ENCODE measurements at regions of chrX and their contacts with region 1.

Region 1: DNA sequence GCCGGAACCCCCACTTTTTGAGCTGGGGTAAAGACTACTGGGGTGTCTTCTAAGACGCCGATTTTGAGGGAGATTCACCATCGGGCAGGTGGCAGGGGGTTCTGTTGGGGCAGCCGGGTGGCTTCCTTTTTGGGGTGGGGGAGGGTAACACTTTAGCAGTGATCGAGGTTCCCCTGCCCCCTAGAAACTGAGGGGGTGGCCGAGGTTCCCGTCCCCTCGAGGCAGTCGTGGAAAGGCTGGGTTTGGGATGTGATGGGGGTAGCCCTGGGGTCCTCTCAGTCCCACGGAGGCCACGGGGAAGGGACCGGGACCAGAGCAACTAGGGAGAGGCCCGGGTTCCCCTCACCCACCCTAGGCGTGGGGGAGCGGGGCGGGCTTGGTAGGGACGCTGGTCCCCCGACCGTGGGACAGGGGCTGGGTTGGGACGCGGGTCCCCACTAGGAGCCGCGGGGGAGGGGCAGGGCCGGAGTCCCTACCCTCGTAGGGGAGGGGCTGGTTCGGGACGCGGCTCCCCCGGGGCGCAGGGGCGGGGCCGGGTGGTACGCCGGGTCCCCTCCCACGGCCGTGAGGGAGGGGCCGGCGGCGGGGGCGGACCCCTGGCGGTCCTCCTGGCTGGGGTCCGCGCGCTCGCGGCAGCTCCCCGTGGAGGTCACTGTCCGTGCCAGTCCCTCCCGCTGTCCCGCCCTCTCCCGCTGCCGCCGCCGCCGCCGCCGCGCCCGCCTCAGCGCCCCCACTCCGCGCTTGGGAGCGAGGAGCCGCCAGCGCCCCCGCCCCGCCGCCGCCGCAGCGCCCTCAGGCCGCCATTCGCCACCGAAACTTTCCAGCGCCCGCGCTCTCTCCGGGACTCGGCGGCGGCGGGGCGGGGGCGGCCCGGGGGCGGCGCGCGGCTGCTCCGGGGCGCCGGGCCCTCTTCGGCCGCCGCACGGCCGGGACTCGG is at the start of gene TBL1X:
- DNase-seq: peak; percentile 65
- H3K4me3 ChIP-seq: peak within 1 kb of the TSS; percentile 65
- H3K27ac ChIP-seq: peak within 1 kb of the TSS; percentile 85
- H3K4me1 ChIP-seq: peaks cover 21% of the 10 kb centered on the region
- H3K27me3 ChIP-seq: no peaks in the 10 kb centered on the region
- CTCF ChIP-seq: no peak
- total RNA-seq, gene TBL1X: 26.9 and 33.0 TPM in 2 replicates

Region 2: GRCh38 chrX:8971116-8971515 is 493.6 kb before region 1 on chrX:
- CTCF ChIA-PET with region 1: no interaction called
- POLR2A ChIA-PET with region 1: no interaction called
- intact Hi-C with region 1: loop called (anchors 2 kb)
- DNase-seq: peak; percentile 60
- H3K4me3 ChIP-seq: no peak overlapping the region
- H3K27ac ChIP-seq: no peak overlapping the region
- H3K4me1 ChIP-seq: no peaks in the 10 kb centered on the region
- H3K27me3 ChIP-seq: no peaks in the 10 kb centered on the region
- CTCF ChIP-seq: peak; percentile 52; the same call in 1 of the 2 replicates

Region 3: DNA sequence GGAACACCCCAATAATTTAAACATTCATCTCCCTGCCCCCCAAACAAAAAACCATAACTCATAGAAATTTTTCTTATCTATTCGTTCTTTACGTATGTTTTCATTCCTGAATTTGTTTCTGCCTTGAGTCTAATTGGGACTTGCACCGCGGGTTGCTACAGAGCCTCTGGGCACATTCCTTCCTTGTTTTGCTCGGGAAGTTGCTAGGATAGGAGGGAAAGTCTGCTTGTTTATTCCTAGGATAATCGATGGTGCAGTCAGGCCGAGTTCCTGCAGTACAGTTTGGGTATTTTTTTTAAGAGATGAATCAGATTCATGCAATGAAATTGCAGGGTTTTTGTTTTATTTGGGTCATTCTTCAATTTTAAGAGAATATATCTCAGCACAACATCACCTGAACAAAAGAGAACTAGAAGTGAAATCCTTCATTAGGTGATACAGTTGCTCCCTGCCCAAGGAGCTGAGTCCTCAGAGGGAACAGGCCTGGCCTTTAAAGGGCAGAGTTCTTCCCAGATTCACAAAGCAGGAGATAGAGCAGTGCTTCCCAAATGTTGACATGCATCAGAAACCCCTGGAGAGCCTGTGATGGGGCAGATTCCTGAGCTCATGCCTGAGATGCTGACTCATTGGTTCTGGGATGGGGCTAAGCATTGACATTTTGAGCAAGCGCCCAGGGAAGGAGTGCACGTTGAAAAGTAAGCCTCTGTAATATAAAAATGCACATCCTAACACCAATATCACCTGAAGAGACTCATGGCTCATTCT is 315.9 kb before region 1 on chrX:
- CTCF ChIA-PET with region 1: no interaction called
- POLR2A ChIA-PET with region 1: no interaction called
- intact Hi-C with region 1: loop called (anchors 10 kb)
- DNase-seq: peak; percentile 41
- H3K4me3 ChIP-seq: no peak overlapping the region
- H3K27ac ChIP-seq: peak overlapping the region; percentile 21
- H3K4me1 ChIP-seq: peaks cover 29% of the 10 kb centered on the region
- H3K27me3 ChIP-seq: no peaks in the 10 kb centered on the region
- CTCF ChIP-seq: no peak

Region 4: DNA sequence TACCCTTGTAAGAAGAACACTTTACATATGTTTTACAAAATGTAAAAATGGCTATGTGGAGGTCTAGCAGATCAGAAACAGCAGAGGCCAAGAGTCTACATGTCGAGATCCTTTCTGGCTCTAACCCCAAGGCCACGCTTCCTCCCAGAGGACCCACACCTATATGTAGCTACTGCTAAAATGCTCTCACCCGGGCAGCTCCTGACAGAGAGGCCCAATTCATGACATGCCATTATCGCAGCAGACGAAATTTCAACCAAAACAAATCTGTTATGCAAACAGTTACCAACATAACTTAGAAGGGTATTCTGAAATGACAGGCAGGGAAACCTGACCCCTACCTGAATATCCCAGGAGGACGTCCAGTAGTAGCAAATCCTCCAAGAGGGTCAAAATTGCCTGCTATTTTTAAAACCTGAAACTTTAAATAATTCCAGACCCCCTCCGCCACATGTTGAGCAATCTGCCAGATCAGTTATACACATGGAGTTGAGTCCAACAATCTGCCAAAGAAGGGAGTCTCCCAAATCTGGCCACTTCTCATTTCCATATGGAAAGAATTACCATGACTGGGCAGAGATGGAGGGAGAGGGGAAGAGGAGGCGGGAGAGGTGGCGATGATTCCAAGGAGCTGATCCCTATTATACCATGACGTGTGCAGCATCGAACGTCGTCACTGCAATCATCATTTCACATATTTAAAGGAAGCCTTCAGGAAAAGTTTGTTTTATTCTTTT is 192.7 kb before region 1 on chrX:
- CTCF ChIA-PET with region 1: no interaction called
- POLR2A ChIA-PET with region 1: no interaction called
- intact Hi-C with region 1: no loop called
- DNase-seq: no peak
- H3K4me3 ChIP-seq: no peak overlapping the region
- H3K27ac ChIP-seq: no peak overlapping the region
- H3K4me1 ChIP-seq: no peaks in the 10 kb centered on the region
- H3K27me3 ChIP-seq: no peaks in the 10 kb centered on the region
- CTCF ChIP-seq: no peak

Region 5: DNA sequence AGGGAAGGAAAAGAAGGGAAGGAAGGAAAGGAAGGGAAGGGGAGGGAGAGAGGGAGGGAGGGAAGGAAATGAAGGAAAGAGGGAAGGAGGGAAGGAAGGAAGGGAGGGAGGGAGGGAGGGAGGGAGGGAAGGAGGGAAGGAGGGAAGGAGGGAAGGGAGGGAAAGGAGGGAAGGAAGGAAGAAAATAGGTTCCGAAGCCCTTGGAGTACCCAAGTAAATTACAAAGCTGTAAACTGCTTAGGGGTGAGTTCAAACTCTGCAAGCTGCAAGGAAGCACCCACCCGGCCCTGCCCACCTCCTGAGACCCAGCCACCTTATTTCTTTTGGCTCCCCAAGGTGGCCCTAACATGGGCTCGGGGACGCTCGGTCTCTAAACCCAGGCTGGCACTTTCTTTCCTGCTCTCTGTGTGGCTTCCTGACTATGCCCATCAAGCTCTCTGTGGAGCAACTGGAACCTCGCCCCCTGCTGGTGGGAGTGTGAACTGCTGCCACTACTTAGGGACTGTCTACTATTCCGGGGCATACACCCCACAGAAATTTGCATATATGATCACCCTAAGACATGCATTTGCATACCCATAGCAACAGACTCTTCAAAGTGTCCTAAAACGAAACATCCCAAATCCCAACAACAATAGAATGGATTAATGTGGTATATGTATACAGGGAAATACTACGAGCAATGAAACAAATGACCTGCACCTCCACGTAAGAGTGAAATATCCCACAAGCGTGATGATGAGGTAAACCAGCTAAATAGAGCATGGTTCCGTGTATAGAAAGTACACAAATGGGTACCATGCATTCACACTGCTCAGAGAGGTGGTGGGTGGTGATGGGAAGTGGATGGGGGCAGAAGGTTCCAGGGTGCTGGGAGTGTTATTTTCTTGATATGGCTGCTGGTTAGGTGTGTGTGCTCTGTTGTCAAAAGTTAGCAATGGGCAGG is 151.5 kb before region 1 on chrX:
- CTCF ChIA-PET with region 1: no interaction called
- POLR2A ChIA-PET with region 1: no interaction called
- intact Hi-C with region 1: no loop called
- DNase-seq: peak; percentile 65
- H3K4me3 ChIP-seq: no peak overlapping the region
- H3K27ac ChIP-seq: no peak overlapping the region
- H3K4me1 ChIP-seq: no peaks in the 10 kb centered on the region
- H3K27me3 ChIP-seq: no peaks in the 10 kb centered on the region
- CTCF ChIP-seq: peak; percentile 87

Region 6: GRCh38 chrX:9341291-9342201 is 123.2 kb before region 1 on chrX:
- CTCF ChIA-PET with region 1: no interaction called
- POLR2A ChIA-PET with region 1: no interaction called
- intact Hi-C with region 1: loop called (anchors 1 kb)
- DNase-seq: peak; percentile 89
- H3K4me3 ChIP-seq: peak overlapping the region; percentile 23
- H3K27ac ChIP-seq: peak overlapping the region; percentile 80
- H3K4me1 ChIP-seq: peaks cover 26% of the 10 kb centered on the region
- H3K27me3 ChIP-seq: no peaks in the 10 kb centered on the region
- CTCF ChIP-seq: no peak; the same call in 1 of the 2 replicates

Region 7: DNA sequence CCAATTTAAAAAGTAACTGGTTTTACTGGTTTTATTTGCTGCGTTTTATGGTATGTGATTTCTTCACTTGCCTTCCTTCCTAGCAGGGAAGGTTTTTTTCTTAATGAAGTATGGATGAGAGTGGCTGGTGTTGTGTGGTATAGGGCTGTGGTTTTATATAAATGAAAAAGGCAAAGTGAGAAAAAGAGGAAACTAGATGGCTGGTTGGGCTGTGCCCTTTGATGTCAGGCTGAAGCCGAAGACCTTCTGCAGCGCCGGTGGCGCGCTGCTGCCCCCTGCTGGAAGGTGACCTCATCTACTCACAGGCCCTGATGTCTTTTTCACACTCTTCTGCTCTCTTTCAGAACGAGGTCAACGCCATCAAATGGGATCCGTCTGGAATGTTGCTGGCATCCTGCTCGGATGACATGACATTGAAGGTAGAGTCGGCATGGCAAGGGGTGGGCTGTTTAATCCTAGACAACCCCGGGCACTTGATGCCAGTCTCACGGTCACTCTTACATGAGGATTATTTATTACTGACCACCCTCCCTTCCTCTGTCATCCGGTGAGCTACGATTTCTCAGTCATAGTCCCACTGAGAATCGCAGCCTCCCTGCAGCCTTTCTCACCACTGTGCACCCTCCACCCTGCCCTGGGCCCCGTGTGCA is 244.3 kb after region 1 on chrX:
- CTCF ChIA-PET with region 1: no interaction called
- POLR2A ChIA-PET with region 1: no interaction called
- intact Hi-C with region 1: loop called (anchors 5 kb)
- DNase-seq: peak; percentile 75
- H3K4me3 ChIP-seq: no peak overlapping the region
- H3K27ac ChIP-seq: no peak overlapping the region
- H3K4me1 ChIP-seq: no peaks in the 10 kb centered on the region
- H3K27me3 ChIP-seq: no peaks in the 10 kb centered on the region
- CTCF ChIP-seq: peak; percentile 88